HEK293T (cell line): ENCODE measurements at regions of chr4 and their contacts with region 1.

Region 1: DNA sequence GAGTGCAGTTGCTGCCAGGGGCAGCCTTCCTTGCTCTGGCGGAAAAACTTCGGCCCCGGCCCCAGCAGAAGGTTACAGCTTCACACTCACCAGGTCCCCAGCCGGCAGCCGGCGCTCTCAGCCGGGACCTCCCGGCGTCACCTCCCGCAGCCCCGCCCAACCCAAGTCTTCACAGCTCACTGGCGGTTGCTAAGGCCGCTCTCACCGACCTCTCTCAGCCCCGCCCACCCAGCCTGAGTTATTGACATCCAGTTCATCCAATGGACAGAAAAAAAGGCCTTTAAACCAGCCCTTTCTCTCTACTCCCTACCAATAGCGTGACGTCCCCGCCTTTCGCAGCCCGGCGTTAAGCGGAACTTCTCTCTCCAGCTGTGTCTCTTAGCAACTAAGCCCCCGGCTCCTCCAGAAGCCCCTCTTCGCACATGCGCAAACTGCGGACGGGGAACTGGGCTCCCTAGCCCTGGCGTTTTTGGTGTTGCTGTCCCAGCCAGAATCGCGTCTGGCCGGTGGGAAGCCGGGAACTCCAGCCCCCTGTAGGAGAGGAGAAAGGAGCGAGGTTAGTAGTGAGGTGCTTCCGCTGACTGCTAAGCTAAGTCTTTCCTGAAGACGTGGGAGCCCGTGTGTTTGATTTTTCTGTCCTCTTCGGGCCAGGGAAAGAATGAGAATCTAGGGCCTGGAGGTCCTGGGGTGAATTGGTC is at the start of gene BBS12:
- DNase-seq: peak; percentile 97

Region 2: GRCh38 chr4:122716825-122717448 is 15.5 kb before region 1 on chr4:
- CTCF ChIA-PET with region 1: interaction called, 15 read pairs
- POLR2A ChIA-PET with region 1: interaction called, 3 read pairs
- DNase-seq: peak; percentile 63

Region 3: GRCh38 chr4:122787940-122788339 is 55.5 kb after region 1 on chr4:
- CTCF ChIA-PET with region 1: no interaction called
- POLR2A ChIA-PET with region 1: no interaction called
- DNase-seq: no peak

Region 4: DNA sequence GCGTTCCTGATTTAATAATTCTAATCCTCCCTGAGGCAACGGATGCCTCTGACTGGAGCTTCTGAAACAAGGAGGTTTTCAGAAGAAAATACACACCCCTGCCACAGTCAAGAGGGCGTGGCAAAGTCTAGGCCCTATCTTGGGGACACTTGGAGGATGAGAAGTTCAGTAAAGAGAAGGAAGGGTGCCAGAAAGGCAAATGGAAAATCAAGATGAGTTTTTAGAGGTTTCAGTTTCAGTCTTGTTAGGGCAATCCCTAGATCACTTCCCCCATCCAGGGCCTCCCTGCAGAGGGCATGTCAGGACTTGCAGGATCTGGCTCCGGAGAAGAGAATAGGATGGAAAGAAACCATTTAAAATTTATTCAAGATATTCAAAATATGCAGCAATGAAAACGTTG is 65.6 kb after region 1 on chr4:
- CTCF ChIA-PET with region 1: no interaction called
- POLR2A ChIA-PET with region 1: no interaction called
- DNase-seq: peak; percentile 47